ENCODE measurements at regions of chr17 and their contacts with region 1.

Region 1: DNA sequence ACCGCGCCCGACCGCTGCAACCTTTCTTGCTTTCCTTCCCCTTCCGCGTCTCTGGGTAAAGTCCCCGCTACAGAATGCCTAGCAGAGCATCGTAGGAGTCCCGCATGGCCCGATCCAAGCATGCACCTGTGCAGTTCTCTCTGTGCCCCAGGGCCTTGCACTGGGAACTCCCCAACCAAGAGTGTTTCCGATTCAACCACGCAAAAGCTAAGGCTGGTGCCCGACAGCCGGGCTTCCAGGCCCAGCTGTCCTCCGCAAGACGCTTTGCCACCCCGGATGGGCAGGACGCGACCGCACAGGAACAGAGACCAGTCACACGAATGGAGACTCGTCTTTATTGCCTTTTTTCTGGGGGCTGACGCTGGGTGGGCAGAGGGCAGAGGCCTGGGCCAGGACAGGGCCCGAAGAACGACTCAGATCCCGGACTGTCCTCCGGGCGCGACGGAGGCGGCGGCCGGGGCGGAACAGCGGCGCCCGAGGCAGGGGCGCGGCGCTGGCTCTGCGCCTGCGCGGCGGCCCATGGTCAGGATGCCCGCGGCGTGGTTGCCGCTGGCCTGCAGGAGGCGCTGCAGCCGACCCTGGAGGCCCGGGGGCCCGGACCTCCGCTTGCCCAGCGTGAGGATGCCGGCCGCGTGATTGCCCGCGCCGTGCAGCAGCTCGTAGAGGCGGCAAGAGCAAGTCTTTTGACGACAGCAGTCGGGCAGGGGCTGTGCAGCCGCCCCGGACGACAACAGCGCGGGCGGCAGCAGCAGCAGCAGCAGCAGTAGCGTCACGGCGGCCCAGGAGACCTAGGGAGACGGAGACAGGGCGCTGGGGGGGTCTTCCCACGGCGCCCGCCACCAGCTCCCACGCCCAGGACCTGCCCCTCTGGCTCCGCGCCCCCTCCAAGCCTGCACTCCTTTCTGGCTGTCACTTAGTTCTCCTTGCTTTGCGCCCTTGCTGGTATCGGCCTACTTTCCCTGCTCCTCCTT is 1.2 kb downstream of the HCRT start:
- DNase-seq: peak; percentile 80
- H3K4me3 Mint-ChIP-seq: peak overlapping the region; percentile 94
- H3K27ac Mint-ChIP-seq: peak overlapping the region; percentile 95
- H3K4me1 Mint-ChIP-seq: peaks cover 50% of the 10 kb centered on the region
- H3K27me3 Mint-ChIP-seq: peaks cover 13% of the 10 kb centered on the region

Region 2: DNA sequence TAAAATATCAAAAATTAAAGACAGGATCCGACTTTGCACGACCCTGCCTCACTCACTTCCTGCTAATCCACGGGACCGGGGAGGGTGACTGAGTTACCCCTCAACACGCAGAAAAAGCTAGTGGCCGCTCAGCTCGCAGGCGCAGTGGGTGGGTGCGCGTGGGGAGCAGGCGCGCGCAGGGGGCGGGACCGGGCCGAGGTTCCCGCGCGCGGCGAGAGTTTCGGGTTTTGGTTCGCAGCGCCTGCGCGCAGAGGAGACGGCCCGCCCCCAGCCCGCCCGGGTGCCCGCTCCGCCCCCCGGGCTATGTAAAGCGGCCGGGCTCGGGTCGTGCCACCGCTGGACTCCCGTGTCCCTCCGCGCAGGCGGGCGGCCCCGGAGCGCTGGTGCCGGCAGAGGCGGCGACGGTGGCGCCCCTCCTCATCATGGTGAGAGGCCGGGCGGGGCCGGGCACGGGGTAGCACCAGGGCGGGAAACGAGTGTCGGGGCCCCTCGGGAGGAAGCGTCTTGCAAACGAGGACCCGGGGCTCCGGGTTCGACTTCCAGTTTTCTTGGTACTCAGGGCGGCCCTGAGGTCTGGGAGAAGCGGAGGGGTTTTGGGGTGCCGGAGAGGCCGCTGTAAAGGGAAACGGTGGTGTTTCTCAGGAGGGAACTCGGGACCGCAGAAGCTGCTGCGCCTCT is 217.4 kb before region 1 on chr17 and contains the start of gene CNP:
- intact Hi-C with region 1: loop called (anchors 1 kb)
- DNase-seq: peak; percentile 87
- H3K4me3 Mint-ChIP-seq: peak within 1 kb of the TSS; percentile 87
- H3K27ac Mint-ChIP-seq: peak within 1 kb of the TSS; percentile 82
- H3K4me1 Mint-ChIP-seq: peaks cover 29% of the 10 kb centered on the region
- H3K27me3 Mint-ChIP-seq: no peaks in the 10 kb centered on the region
- total RNA-seq, gene CNP: 89.1 and 89.8 TPM in 2 replicates

Region 3: GRCh38 chr17:42112552-42113176 is 71.4 kb before region 1 on chr17 and contains the start of gene DHX58:
- intact Hi-C with region 1: loop called (anchors 1 kb)
- DNase-seq: peak; percentile 83
- H3K4me3 Mint-ChIP-seq: peak within 1 kb of the TSS; percentile 85
- H3K27ac Mint-ChIP-seq: peak within 1 kb of the TSS; percentile 86
- H3K4me1 Mint-ChIP-seq: peaks cover 50% of the 10 kb centered on the region
- H3K27me3 Mint-ChIP-seq: no peaks in the 10 kb centered on the region
- total RNA-seq, gene DHX58: 26.9 and 28.4 TPM in 2 replicates

Region 4: DNA sequence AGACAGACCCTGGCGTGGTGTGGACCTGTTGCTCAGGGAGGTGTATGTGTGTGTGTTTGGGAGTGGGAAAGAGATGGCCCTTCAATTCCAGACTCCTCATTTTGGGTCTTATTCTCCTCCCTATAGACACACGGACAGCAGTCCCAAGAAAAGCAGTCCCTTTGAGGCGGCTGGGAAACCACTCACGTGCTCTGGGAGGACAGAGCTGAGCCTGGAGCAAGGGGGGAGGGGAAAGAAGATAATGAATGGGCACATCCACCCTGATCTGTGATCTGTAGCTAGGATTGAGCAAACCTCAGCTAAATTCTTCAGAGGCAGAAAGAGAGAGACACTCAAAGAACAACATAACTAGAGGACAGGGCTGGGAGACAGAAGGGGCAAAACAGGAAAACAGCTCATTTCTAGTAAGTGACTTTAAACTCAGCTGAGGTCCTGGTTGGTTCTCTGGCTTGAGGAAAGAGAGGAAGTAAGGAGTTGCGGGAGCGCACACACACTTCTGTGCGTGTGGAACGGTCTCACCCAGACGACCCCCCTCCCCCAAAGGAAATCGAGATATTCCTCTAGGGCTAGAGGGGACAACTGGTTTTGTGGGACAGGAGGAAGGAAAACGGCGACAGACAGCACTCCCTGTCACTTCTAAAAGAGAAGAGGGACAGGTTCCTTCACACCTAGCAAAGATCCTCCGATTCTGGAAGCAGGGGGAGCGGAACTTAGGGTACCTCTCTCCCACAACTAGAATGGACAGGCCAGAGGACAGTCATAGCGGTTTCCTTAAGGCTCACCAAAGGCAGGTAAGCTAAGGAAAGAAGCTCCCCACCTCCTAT is 29.9 kb before region 1 on chr17:
- intact Hi-C with region 1: loop called (anchors 1 kb)
- DNase-seq: no peak
- H3K4me3 Mint-ChIP-seq: peak overlapping the region; percentile 89
- H3K27ac Mint-ChIP-seq: peak overlapping the region; percentile 75
- H3K4me1 Mint-ChIP-seq: peaks cover 25% of the 10 kb centered on the region
- H3K27me3 Mint-ChIP-seq: no peaks in the 10 kb centered on the region

Region 5: DNA sequence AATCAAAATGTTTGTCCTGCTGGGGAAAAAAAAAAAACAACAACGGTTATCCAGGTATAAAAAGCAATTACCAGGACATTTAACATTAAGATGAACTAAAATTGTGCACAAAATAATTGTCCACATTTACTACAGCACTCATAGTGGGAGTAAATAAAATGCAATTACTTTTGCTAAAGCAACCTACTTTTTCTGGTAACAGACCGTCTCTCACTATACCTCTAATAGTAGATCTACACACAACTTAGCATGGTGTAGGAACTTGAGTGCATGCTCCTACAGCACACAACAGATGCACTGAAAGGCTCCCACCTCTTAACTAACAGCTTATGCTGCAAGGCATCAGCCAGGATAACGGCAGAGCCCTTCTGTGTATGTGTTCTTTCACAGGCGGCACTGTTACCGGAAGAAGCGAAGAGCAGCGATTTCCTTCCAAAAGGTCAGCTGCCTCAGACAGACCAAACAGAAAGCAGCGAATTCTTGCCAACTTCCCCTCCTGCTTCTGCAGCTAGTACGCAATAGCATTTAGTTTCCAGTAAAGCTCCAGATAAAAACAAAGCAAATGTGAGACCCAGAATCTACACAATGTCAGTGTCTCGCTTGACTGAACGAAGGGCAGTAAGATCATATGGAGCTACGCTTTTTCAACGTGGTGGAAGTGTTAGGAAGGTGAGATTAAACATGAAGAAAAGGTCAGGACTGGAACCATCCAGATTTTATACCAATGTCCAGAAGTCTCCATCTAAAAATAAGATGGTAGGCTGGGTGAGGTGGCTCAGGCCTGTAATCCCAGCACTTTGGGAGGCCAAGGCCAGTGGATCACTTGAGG is 64.5 kb after region 1 on chr17:
- intact Hi-C with region 1: loop called (anchors 2 kb)
- DNase-seq: peak; percentile 77
- H3K4me3 Mint-ChIP-seq: peak overlapping the region; percentile 89
- H3K27ac Mint-ChIP-seq: peak overlapping the region; percentile 99
- H3K4me1 Mint-ChIP-seq: peaks cover 61% of the 10 kb centered on the region
- H3K27me3 Mint-ChIP-seq: no peaks in the 10 kb centered on the region

Region 6: DNA sequence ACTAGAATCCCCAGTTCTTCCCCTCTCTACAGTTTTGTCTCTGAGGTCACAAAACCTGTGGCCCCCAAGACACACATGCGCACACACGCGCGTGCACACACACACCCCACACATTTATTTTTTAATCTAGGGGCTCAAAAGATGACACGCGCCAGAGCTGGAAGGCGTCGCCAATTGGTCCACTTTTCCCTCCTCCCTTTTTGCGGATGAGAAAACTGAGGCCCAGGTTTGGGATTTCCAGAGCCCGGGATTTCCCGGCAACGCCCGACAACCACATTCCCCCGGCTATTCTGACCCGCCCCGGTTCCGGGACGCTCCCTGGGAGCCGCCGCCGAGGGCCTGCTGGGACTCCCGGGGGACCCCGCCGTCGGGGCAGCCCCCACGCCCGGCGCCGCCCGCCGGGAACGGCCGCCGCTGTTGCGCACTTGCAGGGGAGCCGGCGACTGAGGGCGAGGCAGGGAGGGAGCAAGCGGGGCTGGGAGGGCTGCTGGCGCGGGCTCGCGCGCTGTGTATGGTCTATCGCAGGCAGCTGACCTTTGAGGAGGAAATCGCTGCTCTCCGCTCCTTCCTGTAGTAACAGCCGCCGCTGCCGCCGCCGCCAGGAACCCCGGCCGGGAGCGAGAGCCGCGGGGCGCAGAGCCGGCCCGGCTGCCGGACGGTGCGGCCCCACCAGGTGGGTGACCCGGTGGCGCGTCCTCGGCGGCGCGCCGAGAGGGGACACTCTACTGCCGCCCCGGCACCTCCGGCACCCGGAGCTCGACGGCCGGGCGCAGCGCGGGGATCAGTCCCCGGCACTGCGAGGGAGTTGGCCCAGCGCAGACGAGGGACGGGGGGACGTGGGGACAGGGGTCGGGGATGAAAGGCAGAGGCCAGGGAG is 104.1 kb after region 1 on chr17 and contains the start of gene STAT5A:
- intact Hi-C with region 1: loop called (anchors 2 kb)
- DNase-seq: peak; percentile 77
- H3K4me3 Mint-ChIP-seq: peak within 1 kb of the TSS; percentile 98
- H3K27ac Mint-ChIP-seq: peak within 1 kb of the TSS; percentile 93
- H3K4me1 Mint-ChIP-seq: peaks cover 68% of the 10 kb centered on the region
- H3K27me3 Mint-ChIP-seq: no peaks in the 10 kb centered on the region
- total RNA-seq, gene STAT5A: 375 and 381 TPM in 2 replicates

Region 7: DNA sequence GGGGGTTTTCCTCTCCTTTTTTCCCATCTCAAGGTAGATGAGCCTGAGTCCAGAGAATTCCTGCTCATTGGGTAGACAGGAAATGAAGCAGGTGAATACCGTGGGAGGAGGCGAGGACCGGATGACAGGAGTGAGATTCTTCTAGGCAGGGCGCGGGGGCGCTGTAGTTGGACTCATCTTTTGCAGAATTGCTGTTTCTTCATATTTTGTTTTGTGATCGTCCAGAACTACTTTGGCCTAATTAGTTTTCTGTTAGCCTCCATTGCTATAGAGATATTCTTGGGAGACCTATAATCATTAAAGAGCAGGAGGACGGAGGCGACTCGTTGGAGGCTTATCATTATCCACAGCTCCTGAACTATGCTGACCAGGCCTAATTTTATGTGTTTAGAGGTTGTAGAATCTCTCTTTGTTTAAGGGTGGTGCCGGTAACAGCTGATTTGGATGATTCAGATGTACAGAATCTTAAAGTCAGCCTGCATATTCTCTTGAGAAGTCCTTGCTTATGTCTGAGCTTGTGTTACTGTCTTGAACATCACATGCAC is 275.3 kb after region 1 on chr17:
- intact Hi-C with region 1: loop called (anchors 5 kb)
- DNase-seq: peak; percentile 5
- H3K4me3 Mint-ChIP-seq: peak overlapping the region; percentile 91
- H3K27ac Mint-ChIP-seq: peak overlapping the region; percentile 93
- H3K4me1 Mint-ChIP-seq: peaks cover 44% of the 10 kb centered on the region
- H3K27me3 Mint-ChIP-seq: peaks cover 10% of the 10 kb centered on the region